ENCODE measurements at regions of chr2 and their contacts with region 1.

Region 1: DNA sequence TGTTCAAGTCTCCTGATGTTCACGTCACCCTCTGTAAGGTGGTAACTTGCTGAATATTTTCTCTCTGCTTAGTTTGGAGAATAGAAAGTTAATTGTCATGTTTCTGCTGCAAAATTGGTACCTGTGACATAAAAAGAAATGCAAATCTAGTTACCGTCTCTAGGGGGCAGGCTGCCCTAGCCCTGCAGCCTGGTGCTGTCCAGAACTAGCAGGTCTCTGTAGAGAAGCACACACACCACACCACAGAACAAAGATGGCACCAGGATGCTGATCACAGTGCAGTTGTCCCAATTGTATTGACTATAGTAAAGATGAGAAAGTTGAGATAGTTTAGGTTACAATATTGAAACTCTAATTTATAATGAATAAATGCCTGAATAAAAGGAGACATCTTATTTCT is 47.0 kb downstream of the SLC9A4 start:
- DNase-seq: no peak

Region 2: DNA sequence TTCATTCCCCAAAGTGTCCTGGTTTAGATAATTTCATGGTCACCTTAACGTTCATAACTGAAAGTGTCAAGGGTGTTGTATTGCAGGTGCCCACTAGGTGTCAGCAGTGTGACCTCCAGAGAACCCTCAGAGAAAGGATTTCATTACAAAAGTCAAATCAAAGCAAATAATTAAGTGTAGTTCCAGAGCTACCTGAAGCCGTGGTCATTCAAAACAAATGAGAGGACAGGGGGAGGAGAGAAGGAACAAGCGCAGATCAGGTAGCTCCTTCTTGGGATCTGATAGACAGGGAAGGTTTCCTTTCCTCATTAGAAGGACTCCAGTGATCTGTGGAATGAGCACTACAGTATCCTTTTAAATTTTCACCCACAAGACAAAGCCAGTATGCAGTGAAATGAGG is 47.0 kb before region 1 on chr2 and contains the start of gene SLC9A4:
- intact Hi-C with region 1: no loop called
- DNase-seq: no peak
- total RNA-seq, gene SLC9A4: not detected

Region 3: DNA sequence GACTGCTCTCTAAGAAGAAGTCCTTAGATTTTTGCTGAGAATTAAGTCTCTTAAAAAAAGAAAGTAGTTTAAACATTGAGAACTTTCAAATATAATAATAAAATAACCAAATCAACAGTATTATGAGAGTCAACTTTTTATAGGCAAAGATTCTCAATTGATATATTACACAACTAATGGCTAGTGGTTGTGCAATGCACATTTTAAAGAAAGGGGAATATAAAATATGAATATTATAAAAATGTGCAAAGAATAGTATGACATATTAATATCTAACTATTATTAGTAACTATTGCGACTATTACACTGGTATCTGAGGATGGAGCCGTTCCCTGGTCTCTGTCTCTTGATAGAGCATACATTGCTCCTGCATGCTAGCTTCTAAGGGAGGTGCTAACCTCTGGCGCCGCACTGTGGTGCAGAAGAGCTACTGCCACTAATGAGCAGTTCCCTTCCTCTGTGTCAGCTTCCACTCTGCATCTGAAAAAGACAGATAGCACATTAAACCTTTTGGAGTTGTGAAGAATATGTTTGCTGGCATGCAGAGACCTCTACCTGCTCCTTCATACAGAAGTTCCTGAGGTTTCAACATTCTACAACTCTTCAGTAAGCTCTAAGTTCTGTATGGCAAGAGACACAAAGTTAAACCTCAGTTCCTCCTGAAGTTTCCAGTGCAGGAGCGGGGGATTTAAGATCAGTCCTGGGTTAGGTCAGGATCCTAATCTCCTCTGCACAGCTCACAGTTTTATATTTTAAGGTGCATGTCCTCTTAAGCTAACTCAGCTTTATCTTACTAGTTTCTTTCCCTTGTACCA is 95.8 kb after region 1 on chr2:
- intact Hi-C with region 1: loop called (anchors 5 kb)
- DNase-seq: peak; percentile 80

Region 4: GRCh38 chr2:102703748-102704147 is 183.7 kb after region 1 on chr2:
- intact Hi-C with region 1: loop called (anchors 5 kb)
- DNase-seq: no peak

Region 5: GRCh38 chr2:103945083-103945482 is 1425.1 kb after region 1 on chr2:
- intact Hi-C with region 1: no loop called
- DNase-seq: no peak

Measured in cardiac septum (tissue), 1 donor.